CD8-positive, alpha-beta T cell (primary cell): ENCODE measurements at regions of chr5 and their contacts with region 1.

Region 1: GRCh38 chr5:160342403-160342941 is 28.0 kb downstream of the C1QTNF2 start:
- DNase-seq: no peak
- ATAC-seq: no peak
- H3K4me3 ChIP-seq: no peak overlapping the region
- H3K4me3 Mint-ChIP-seq: no peak overlapping the region
- H3K27ac ChIP-seq: no peak overlapping the region
- H3K27ac Mint-ChIP-seq: no peak overlapping the region
- H3K4me1 ChIP-seq: peaks cover 5% of the 10 kb centered on the region
- H3K4me1 Mint-ChIP-seq: no peaks in the 10 kb centered on the region
- H3K27me3 ChIP-seq: no peaks in the 10 kb centered on the region
- H3K27me3 Mint-ChIP-seq: no peaks in the 10 kb centered on the region
- CTCF ChIP-seq: no peak

Region 2: DNA sequence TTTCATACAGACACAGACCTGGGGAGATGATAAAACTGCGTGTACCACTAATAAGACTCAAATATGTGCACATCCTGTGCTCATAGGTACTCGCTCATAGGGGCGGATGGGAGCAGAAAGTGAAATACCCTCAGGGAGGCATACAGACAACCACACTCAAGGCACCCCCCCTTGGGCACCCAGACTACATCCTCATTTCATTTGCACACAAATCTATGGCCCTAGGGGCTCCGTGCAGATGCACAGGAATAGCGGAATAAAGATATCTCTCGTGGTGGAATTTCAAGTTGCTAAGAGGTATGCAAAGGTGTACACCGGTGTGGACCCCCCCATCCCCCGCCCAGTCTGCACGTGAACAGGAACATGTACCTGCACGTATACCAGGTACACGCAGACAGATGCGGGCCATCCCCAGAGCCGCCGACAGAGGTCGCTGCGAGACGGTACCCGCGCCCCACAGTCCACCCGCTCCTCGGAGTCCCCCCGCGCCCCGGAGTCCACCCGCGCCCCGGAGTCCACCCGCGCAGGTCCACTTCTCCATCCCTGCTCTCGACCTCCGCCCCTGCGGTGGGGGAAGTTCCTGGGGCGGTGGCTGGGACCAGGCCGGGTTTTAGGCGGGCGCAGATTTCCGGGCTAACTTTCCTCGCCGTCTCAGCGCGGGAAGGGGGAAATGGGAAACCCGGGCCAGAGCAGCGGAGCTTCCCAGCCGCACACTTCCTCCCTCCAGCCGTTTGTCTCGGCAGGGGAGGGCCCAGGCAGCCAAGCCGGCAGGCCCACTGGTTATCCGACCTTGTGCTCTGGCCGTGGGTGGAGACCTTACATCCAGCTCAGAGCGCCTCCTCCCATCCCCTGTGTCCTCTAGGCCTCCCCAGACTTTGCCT is 1011.1 kb before region 1 on chr5:
- CTCF ChIA-PET with region 1: no interaction called
- POLR2A ChIA-PET with region 1: no interaction called
- intact Hi-C with region 1: loop called in 1 of 2 experiments (anchors 10 kb)
- DNase-seq: peak; percentile 56 to 85 (median 78)
- ATAC-seq: peak; percentile 91
- H3K4me3 ChIP-seq: peak overlapping the region; percentile 42 to 49
- H3K4me3 Mint-ChIP-seq: peak overlapping the region; percentile 64
- H3K27ac ChIP-seq: no peak overlapping the region
- H3K27ac Mint-ChIP-seq: no peak overlapping the region
- H3K4me1 ChIP-seq: peaks cover 4% of the 10 kb centered on the region
- H3K4me1 Mint-ChIP-seq: peaks cover 15% of the 10 kb centered on the region
- H3K27me3 ChIP-seq: no peaks in the 10 kb centered on the region
- H3K27me3 Mint-ChIP-seq: peaks cover 16% of the 10 kb centered on the region
- CTCF ChIP-seq: peak; percentile 75

Region 3: DNA sequence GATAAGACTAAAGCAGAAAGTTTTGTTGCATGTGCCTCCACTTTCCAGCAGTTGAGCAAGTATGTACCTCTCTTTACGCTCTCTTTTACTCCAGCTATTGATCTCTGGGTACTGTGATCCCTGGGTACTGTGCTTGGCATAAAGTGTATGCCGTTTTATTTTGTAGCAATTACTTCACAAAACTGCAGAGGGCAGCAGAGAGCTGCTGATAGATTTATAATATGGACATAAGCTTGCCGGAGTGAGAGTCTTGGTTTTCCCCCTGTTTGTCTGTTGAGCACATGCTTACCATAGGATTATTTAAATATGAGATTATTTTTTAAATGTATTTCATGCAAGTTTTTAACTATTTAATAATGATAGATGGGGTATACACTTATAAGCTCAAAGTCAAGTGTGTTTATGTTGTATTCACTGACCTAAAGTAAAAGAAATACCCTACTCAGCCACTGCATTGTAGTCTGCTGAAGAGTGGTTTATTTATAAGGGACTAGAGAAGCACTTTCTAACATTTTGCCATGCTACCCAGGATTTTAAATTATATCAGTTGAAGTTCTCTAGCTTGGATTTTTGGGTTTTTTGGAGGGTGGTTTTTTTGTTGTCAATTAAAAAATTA is 320.5 kb before region 1 on chr5:
- CTCF ChIA-PET with region 1: interaction called, 133 read pairs
- POLR2A ChIA-PET with region 1: interaction called, 4 read pairs
- intact Hi-C with region 1: loop called in 1 of 2 experiments (anchors 1 kb)
- DNase-seq: peak; percentile 4 to 80 (median 53)
- ATAC-seq: peak; percentile 91
- H3K4me3 ChIP-seq: no peak overlapping the region
- H3K4me3 Mint-ChIP-seq: no peak overlapping the region
- H3K27ac ChIP-seq: no peak overlapping the region
- H3K27ac Mint-ChIP-seq: peak overlapping the region; percentile 42
- H3K4me1 ChIP-seq: peaks cover 3% of the 10 kb centered on the region
- H3K4me1 Mint-ChIP-seq: peaks cover 35% of the 10 kb centered on the region
- H3K27me3 ChIP-seq: no peaks in the 10 kb centered on the region
- H3K27me3 Mint-ChIP-seq: no peaks in the 10 kb centered on the region
- CTCF ChIP-seq: peak; percentile 91

Region 4: DNA sequence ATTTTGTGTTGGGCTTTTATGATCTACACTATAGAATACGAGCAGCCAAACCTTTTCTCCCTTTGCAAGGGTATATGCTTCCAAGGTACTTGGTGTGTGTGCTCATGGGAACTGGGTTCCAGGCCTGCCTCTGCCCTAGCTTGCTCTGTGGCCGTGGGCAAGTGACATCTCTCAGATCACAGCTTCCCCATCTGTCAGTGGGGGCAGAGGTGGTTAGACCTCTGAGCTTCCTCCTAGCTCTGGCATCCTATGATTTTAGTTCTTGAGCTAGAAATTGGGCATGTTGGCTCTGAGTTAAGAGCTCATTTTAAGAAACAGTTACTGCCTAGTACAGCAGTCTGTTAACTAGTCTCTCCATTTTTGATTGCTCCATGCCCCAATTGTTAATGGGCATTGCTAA is 17.6 kb before region 1 on chr5:
- CTCF ChIA-PET with region 1: interaction called, 20 read pairs
- POLR2A ChIA-PET with region 1: no interaction called
- intact Hi-C with region 1: no loop called
- DNase-seq: no peak
- ATAC-seq: no peak
- H3K4me3 ChIP-seq: no peak overlapping the region
- H3K4me3 Mint-ChIP-seq: no peak overlapping the region
- H3K27ac ChIP-seq: no peak overlapping the region
- H3K27ac Mint-ChIP-seq: no peak overlapping the region
- H3K4me1 ChIP-seq: no peaks in the 10 kb centered on the region
- H3K4me1 Mint-ChIP-seq: peaks cover under 1% of the 10 kb centered on the region
- H3K27me3 ChIP-seq: no peaks in the 10 kb centered on the region
- H3K27me3 Mint-ChIP-seq: peaks cover 2% of the 10 kb centered on the region
- CTCF ChIP-seq: no peak